Activated CD4-positive, alpha-beta memory T cell treated with anti-CD3 and anti-CD28 coated beads for 36 hours (primary cell): ENCODE measurements at regions of chr17 and their contacts with region 1.

Region 1: GRCh38 chr17:59914274-59914854 is 21.4 kb downstream of the RPS6KB1 start:
- DNase-seq: no peak
- H3K4me3 Mint-ChIP-seq: no peak overlapping the region
- H3K27ac Mint-ChIP-seq: no peak overlapping the region
- H3K4me1 Mint-ChIP-seq: no peaks in the 10 kb centered on the region
- H3K27me3 Mint-ChIP-seq: no peaks in the 10 kb centered on the region

Region 2: DNA sequence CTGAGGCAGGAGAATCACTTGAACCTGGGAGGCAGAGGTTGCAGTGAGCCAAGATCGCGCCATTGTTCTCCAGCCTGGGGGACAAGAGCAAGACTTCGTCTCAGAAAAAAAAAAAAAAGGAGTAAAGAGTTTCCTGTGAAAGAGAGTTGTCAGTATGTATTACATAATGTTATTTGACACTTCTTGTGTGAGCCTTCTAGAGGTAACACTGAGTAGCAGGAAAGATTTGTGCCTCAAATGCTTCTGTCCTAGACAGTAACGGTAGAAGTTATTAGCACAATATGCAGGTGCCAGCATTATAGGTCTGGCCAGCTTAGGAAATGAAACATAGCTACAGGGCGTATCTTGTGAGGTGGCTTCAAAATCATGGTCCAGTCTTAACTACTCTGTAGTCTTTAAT is 15.3 kb before region 1 on chr17:
- CTCF ChIA-PET with region 1: interaction called, 14 read pairs
- POLR2A ChIA-PET with region 1: no interaction called
- intact Hi-C with region 1: no loop called
- DNase-seq: no peak
- H3K4me3 Mint-ChIP-seq: no peak overlapping the region
- H3K27ac Mint-ChIP-seq: no peak overlapping the region
- H3K4me1 Mint-ChIP-seq: peaks cover 44% of the 10 kb centered on the region
- H3K27me3 Mint-ChIP-seq: no peaks in the 10 kb centered on the region